AG04450 (cell line): ENCODE measurements at regions of chr20 and their contacts with region 1.

Region 1: GRCh38 chr20:1802385-1803060 is 92.7 kb upstream of the SIRPA start:
- DNase-seq: no peak
- H3K4me3 ChIP-seq: peak overlapping the region; percentile 58
- H3K27ac ChIP-seq: no peak overlapping the region
- H3K27me3 ChIP-seq: no peaks in the 10 kb centered on the region
- CTCF ChIP-seq: peak; percentile 61

Region 2: DNA sequence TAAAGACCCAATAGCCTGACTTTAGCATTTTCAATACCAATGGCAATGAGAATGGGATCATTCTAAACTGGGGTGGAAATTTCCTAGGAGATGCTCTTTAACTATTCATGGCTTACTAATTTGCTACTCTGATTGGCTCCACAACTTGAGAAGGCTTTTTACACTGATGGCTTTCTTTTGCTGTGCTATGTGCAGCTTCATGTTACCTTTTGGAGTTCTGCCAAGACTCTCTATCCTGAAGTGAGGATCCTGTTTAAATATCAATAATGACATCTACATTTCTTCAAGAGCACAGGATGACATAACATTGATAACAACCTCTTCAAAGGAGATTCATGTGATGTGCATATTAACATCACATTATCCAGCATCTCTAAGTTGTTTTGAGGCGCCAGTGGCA is 101.5 kb before region 1 on chr20:
- CTCF ChIA-PET with region 1: no interaction called
- POLR2A ChIA-PET with region 1: no interaction called
- DNase-seq: no peak
- H3K4me3 ChIP-seq: no peak overlapping the region
- H3K27ac ChIP-seq: no peak overlapping the region
- H3K27me3 ChIP-seq: peaks cover 2% of the 10 kb centered on the region
- CTCF ChIP-seq: no peak

Region 3: DNA sequence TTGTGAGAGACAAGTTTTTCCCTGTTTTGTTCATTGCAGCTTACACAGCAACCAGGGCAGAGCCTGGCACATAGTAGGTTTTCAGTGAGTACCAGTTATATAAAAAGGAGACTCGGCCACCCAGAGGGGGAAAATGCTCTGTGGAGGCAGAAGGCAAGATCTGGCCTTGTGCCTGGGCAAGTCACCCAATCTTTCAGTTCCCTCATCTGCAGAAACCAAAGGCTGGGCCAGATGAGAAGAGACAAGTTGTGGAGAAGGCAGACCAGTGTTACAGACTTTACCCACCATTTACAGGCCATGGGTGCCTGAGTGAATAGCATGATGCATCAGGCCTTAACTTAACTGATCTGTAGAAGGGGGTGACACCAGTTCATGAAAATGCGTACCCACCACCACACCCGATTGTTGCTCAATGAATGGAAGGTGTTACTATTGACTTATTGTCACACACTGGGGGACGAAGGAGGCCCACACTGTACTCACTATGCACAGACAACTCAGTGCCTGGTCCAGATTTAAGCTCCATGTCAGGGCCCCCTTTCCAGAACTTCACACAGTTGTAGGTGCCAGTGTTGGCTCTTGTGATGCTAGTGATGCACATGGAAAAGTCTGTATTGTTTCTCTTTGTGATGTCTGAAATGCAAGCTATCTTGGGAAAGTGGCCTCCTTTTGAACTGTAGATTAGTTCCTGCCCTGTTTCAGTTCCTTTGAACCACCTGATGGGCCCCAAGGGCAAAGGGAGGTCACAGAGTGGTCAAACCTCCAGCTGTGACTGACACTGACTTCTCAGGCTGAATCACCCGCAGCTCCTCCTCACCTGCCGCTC is 80.6 kb before region 1 on chr20:
- CTCF ChIA-PET with region 1: no interaction called
- POLR2A ChIA-PET with region 1: no interaction called
- DNase-seq: no peak
- H3K4me3 ChIP-seq: no peak overlapping the region
- H3K27ac ChIP-seq: no peak overlapping the region
- H3K27me3 ChIP-seq: no peaks in the 10 kb centered on the region
- CTCF ChIP-seq: no peak

Region 4: GRCh38 chr20:1764136-1765033 is 38.1 kb before region 1 on chr20:
- CTCF ChIA-PET with region 1: interaction called, 43 read pairs
- POLR2A ChIA-PET with region 1: no interaction called
- DNase-seq: peak; percentile 62
- H3K4me3 ChIP-seq: no peak overlapping the region
- H3K27ac ChIP-seq: no peak overlapping the region
- H3K27me3 ChIP-seq: no peaks in the 10 kb centered on the region
- CTCF ChIP-seq: peak; percentile 95